Right ventricle myocardium inferior (tissue), 1 donor: ENCODE measurements at regions of chr15 and their contacts with region 1.

Region 1: DNA sequence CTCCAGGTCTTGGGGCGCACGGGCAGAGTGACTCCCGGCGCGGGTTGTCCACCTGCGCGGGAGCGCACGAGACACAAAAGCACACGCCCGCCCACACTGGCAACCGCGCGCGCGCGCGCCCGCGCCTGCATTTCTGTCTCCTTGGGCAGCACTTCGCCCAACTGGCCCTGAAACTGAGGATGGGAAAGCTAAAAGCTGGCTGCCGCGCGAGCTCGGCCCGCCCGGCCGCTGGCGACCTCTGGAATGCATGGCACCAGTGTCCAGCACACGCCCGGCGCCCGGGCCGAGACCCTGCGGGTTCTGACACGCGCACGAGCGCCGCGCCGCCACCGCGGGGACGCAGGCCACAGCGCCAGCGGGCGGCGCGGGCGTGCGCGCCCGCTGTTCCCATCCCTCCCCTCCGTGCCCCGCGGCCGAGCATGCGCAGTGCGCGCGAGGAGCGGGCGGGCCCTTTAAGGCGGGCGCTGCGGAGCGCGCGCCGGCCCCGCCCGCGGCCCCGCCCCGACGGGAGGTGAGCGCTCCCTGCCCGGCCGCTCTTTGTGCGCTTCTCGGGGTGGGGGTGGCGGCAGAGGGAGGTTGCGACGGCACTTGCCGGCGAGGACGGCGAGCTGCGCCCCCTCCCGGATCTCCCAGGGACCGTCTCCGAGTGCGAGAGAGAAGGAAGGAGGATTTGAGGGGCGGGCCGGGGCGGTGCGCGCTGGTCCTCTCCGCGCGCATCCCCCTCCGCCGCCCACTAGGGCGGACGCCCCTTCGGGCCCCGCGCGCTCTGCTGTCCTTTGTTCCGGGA is 1.0 kb upstream of the MEX3B start:
- DNase-seq: peak; percentile 94
- ATAC-seq: peak; percentile 85

Region 2: DNA sequence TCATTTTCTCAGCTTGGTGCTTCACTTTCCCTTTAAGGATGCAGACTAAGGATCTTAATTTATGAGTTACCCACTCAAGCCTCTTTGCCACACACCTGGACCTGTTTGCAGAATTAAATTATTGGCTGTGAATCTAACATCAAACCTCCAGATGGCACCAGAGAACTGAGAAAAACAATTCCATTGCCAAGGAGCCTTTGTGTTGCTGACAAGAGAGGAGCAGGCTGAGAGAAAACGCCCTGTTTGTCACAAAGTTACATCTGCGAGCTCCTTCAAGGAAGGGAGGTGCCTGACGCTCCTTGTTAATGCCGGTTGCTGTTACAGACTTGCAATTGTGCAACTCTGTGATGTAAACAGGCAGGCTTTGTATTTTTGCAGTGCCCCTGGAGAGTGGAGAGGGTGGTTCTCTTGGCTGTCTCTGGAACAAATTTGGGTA is 636.5 kb before region 1 on chr15:
- intact Hi-C with region 1: loop called (anchors 5 kb)
- DNase-seq: peak; percentile 65
- ATAC-seq: peak; percentile 89

Region 3: GRCh38 chr15:81612630-81613029 is 434.2 kb before region 1 on chr15:
- intact Hi-C with region 1: no loop called
- DNase-seq: no peak
- ATAC-seq: no peak

Region 4: GRCh38 chr15:81813178-81813577 is 233.7 kb before region 1 on chr15:
- intact Hi-C with region 1: loop called (anchors 10 kb)
- DNase-seq: no peak
- ATAC-seq: no peak

Region 5: GRCh38 chr15:81914734-81915256 is 132.1 kb before region 1 on chr15:
- intact Hi-C with region 1: loop called (anchors 5 kb)
- DNase-seq: peak; percentile 77
- ATAC-seq: peak; percentile 91

Region 6: DNA sequence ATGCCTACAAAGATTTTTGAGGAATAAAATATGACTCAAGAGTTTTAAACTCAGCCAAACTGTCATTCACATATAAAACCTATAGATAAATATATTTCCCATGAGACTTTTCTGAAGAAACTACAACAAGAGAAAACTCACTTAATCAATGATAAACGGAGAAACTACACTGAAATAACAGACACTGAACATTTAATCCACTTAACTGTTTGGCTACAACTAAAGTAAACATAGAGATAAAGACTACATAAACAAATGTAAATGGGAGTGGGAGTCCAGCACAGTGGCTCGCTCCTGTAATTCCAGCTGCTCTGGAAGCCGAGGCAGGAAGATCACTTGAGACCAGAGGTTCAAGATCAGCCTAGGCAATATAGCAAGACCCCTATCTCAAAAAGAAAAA is 80.2 kb before region 1 on chr15:
- intact Hi-C with region 1: no loop called
- DNase-seq: no peak
- ATAC-seq: no peak

Region 7: GRCh38 chr15:81992523-81992922 is 54.3 kb before region 1 on chr15:
- intact Hi-C with region 1: no loop called
- DNase-seq: no peak
- ATAC-seq: no peak

Region 8: DNA sequence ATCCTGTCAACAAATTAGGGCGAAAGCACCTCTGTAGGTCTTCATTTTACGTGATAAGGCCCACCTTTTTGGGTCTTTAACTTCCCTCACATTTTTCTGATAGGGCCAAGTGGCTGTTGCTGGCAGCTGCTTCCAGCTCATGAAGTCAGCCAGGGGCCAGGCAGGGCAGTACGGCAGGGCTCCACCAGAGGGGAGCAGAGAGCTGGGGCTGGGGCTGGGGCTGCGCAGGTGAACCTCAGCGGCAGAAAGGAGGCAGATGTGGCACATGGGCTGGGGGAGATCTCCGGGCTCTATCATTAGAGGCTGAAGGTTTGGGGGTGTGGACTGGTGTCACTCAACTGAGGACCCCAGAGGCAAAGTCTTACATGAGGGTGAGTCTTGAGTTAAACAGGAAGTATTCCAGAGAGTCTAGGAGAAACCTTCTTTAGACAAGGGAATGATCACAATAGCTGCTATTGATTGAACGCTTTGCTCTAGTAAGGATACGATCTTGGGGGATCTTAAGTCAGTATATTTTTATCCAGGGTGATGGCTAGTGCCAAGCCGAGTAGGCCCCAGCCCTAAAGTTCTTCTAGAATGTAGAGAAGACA is 61.7 kb after region 1 on chr15:
- intact Hi-C with region 1: no loop called
- DNase-seq: no peak
- ATAC-seq: peak; percentile 86

Region 9: GRCh38 chr15:82197733-82198594 is 151.1 kb after region 1 on chr15:
- intact Hi-C with region 1: loop called (anchors 2 kb)
- DNase-seq: no peak
- ATAC-seq: peak; percentile 88